ENCODE measurements at regions of chr4 and their contacts with region 1.

Region 1: DNA sequence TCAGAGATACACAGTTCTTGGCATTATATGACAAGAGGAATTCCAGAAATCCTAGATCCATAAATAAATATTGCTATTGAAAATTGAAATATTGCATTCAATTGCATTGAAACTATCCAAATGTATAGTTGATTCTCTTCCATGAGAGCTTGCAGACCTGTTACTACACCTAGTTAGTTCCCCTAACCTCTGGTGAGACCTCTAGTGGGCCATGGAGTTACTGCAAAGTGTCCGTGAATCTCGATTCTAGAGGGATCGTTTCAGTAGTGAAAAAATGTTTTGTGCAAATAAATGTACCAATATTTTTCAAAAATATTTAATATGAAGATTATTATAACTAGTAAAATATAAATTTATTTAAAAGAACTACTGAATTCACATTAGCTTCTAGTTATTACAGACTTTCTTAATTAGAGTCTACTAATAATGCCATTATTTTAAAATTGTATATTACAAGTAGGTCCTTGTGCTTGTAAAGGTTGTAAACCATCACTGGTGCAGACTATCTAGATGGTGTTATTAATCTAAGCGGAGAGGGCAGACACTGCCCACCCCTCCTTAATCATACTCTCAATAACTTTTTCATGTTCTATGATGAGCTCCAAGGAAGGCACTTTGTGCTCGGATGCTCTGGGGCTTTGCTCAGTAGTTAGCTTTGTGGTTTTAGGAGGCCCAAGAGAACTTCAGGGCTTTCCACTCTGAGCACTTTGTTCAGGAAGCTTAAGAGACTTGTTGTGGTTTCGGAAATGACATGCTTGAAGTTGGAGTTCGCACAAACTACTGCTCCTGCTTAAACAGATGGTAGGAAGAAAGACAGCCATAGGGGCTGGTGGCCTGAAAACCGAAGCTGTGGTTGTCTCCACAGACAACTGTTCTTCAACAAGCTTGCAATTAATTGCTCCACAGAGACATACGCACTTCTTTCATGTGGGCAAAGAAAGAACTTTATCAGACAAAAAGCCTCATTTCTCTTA is 42.8 kb downstream of the IL21 start:
- DNase-seq: peak; percentile 66
- H3K4me3 Mint-ChIP-seq: peak overlapping the region; percentile 63
- H3K27ac Mint-ChIP-seq: peak overlapping the region; percentile 90
- H3K4me1 Mint-ChIP-seq: peaks cover 38% of the 10 kb centered on the region
- H3K27me3 Mint-ChIP-seq: no peaks in the 10 kb centered on the region

Region 2: GRCh38 chr4:121582296-121582695 is 995.8 kb before region 1 on chr4:
- intact Hi-C with region 1: no loop called
- DNase-seq: no peak
- H3K4me3 Mint-ChIP-seq: no peak overlapping the region
- H3K27ac Mint-ChIP-seq: no peak overlapping the region
- H3K4me1 Mint-ChIP-seq: peaks cover 3% of the 10 kb centered on the region
- H3K27me3 Mint-ChIP-seq: peaks cover 14% of the 10 kb centered on the region

Region 3: GRCh38 chr4:121900132-121900983 is 677.7 kb before region 1 on chr4:
- intact Hi-C with region 1: loop called (anchors 1 kb)
- DNase-seq: peak; percentile 20
- H3K4me3 Mint-ChIP-seq: no peak overlapping the region
- H3K27ac Mint-ChIP-seq: no peak overlapping the region
- H3K4me1 Mint-ChIP-seq: peaks cover 6% of the 10 kb centered on the region
- H3K27me3 Mint-ChIP-seq: peaks cover 13% of the 10 kb centered on the region

Region 4: DNA sequence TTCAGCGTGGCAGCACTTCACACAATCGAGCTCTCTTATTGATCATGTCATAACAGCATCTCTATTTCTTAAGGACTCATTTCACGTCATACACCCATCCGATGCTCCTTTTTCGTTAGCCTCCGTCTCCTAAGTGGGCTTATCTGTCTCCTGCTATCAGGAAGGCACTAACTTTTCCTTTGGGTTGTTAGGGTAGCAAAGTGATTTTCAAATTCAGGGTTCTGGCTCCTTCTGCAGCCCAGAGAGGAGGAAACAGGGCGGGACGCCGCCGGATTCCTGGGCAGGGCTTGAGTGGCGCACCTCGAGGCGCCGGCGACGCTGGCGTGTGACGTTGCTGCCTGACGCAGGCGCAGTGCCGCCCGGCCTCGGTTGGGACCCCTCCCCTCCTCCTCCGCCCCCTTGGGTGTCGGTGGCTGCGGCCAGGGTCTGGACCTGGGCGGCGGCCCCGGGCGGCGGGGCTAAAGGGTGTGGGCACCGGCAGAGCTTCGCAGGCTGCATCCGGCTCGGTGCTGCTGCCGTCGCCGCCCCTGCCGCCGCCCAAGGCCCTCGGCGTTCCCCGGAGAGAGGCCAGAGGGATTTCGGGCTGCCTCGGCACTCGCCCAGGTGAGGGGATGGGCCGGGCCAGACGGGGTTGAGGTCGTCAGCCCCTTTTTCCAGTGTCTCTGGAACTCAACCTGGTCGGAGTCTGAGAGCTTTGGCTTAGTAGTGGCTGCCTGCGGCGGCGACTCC is 425.9 kb before region 1 on chr4 and contains the start of gene BLTP1:
- intact Hi-C with region 1: loop called (anchors 2 kb)
- DNase-seq: peak; percentile 85
- H3K4me3 Mint-ChIP-seq: peak within 1 kb of the TSS; percentile 98
- H3K27ac Mint-ChIP-seq: peak within 1 kb of the TSS; percentile 92
- H3K4me1 Mint-ChIP-seq: peaks cover 50% of the 10 kb centered on the region
- H3K27me3 Mint-ChIP-seq: no peaks in the 10 kb centered on the region
- total RNA-seq, gene BLTP1: 28.1 and 32.6 TPM in 2 replicates

Region 5: DNA sequence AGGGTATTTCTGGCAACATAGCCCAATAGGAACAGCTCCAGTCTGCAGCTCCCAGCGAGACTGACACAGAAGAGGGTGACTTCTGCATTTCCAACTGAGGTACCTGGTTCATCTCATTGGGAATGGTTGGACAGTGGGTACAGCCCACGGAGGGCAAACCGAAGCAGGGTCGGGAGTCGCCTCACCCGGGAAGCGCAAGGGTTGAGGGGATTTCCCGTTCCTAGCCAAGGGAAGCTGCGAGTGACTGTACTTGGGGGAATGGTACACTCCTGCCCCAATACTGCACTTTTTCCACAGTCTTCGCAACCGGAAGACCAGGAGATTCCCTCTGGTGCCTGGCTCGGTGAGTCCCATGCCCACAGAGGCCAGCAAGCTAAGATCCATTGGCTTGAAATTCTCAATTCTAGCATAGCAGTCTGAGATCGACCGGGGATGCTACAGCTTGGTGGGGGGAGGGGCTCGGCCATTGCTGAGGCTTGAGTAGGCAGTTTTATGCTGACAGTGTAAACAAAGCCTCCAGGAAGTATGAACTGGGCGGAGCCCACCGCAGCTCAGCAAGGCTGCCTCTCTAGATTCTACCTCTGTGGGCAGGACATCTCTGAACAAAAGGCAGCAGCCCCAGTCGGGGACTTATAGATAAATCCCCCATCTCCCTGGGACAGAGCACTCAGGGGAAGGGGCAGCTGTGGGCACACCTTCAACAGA is 213.2 kb before region 1 on chr4:
- intact Hi-C with region 1: loop called (anchors 2 kb)
- DNase-seq: no peak
- H3K4me3 Mint-ChIP-seq: no peak overlapping the region
- H3K27ac Mint-ChIP-seq: no peak overlapping the region
- H3K4me1 Mint-ChIP-seq: peaks cover 4% of the 10 kb centered on the region
- H3K27me3 Mint-ChIP-seq: peaks cover 2% of the 10 kb centered on the region

Region 6: DNA sequence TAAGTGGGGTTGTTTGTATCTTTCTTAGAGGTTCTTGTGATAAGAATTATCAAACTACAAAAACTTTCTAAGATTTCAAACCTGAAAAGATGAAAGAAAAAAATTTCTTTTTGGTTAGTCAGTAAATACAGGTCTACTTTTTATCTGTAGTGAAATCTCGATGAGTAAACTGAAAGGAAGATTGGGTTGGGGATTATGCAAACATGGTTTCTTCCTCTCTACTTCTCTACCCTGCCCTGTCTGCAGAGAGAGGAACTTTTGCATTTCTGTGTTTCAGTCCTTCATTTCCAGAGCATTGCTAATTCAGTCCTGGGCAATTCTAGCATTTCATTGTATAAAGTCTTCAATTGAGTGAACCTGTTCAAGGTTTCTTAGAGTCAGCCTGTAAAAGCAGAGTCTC is 70.0 kb before region 1 on chr4:
- intact Hi-C with region 1: loop called (anchors 1 kb)
- DNase-seq: no peak
- H3K4me3 Mint-ChIP-seq: peak overlapping the region; percentile 54
- H3K27ac Mint-ChIP-seq: peak overlapping the region; percentile 78
- H3K4me1 Mint-ChIP-seq: peaks cover 57% of the 10 kb centered on the region
- H3K27me3 Mint-ChIP-seq: peaks cover 22% of the 10 kb centered on the region

Region 7: GRCh38 chr4:122562449-122562848 is 15.6 kb before region 1 on chr4:
- intact Hi-C with region 1: no loop called
- DNase-seq: no peak
- H3K4me3 Mint-ChIP-seq: no peak overlapping the region
- H3K27ac Mint-ChIP-seq: no peak overlapping the region
- H3K4me1 Mint-ChIP-seq: peaks cover 7% of the 10 kb centered on the region
- H3K27me3 Mint-ChIP-seq: no peaks in the 10 kb centered on the region

Region 8: GRCh38 chr4:122922877-122923511 is 344.9 kb after region 1 on chr4:
- intact Hi-C with region 1: loop called (anchors 2 kb)
- DNase-seq: peak; percentile 88
- H3K4me3 Mint-ChIP-seq: peak overlapping the region; percentile 95
- H3K27ac Mint-ChIP-seq: peak overlapping the region; percentile 97
- H3K4me1 Mint-ChIP-seq: peaks cover 15% of the 10 kb centered on the region
- H3K27me3 Mint-ChIP-seq: no peaks in the 10 kb centered on the region

Measured in activated T-helper 2 cell treated with anti-CD3 and anti-CD28 coated beads, Interferon-gamma antibody, Interleukin-2, Interleukin-4, amounts not matched to agents 10 μg/mL and 5 μg/mL and 100 μg/mL, durations not matched to agents 14 hours and 24 hours and 36 hours (primary cell).